Caco-2 (cell line): ENCODE measurements at regions of chr6 and their contacts with region 1.

Region 1: GRCh38 chr6:157124485-157125254 is 198.6 kb downstream of the TMEM242 start:
- DNase-seq: no peak
- H3K4me3 ChIP-seq: no peak overlapping the region
- H3K4me3 Mint-ChIP-seq: no peak overlapping the region
- H3K27ac Mint-ChIP-seq: no peak overlapping the region
- H3K4me1 ChIP-seq: peaks cover 35% of the 10 kb centered on the region
- H3K4me1 Mint-ChIP-seq: peaks cover 35% of the 10 kb centered on the region
- H3K27me3 ChIP-seq: no peaks in the 10 kb centered on the region
- H3K27me3 Mint-ChIP-seq: no peaks in the 10 kb centered on the region
- CTCF ChIP-seq: no peak

Region 2: GRCh38 chr6:156925718-156926615 is 198.7 kb before region 1 on chr6:
- CTCF ChIA-PET with region 1: no interaction called
- POLR2A ChIA-PET with region 1: no interaction called
- intact Hi-C with region 1: no loop called
- DNase-seq: peak in 1 of 2 experiments; percentile 39
- H3K4me3 ChIP-seq: no peak overlapping the region
- H3K4me3 Mint-ChIP-seq: peak overlapping the region; percentile 51
- H3K27ac Mint-ChIP-seq: peak overlapping the region; percentile 16
- H3K4me1 ChIP-seq: peaks cover 23% of the 10 kb centered on the region
- H3K4me1 Mint-ChIP-seq: peaks cover 10% of the 10 kb centered on the region
- H3K27me3 ChIP-seq: no peaks in the 10 kb centered on the region
- H3K27me3 Mint-ChIP-seq: no peaks in the 10 kb centered on the region
- CTCF ChIP-seq: no peak

Region 3: DNA sequence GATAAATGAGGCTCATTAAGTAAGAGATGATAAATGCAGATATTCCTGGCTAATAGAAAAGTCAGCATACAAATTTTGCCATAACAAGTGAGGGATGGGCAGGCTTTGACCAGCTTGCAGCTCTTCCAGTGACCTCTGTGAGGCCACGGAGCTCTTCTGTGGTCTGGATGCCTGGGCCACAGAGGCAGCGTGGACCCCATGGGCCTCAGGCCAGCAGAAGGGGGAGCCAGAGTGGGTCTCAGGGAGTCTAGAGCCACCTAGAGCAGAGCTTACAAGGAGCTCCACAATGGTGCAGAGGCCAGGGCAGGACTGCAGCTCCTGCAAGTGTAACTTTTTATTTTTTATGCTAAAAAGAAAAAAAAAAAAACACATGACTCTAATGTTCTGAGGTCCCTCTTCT is 182.4 kb before region 1 on chr6:
- CTCF ChIA-PET with region 1: no interaction called
- POLR2A ChIA-PET with region 1: no interaction called
- intact Hi-C with region 1: no loop called
- DNase-seq: no peak
- H3K4me3 ChIP-seq: no peak overlapping the region
- H3K4me3 Mint-ChIP-seq: no peak overlapping the region
- H3K27ac Mint-ChIP-seq: no peak overlapping the region
- H3K4me1 ChIP-seq: peaks cover 4% of the 10 kb centered on the region; the same call in 1 of the 2 replicates
- H3K4me1 Mint-ChIP-seq: peaks cover 6% of the 10 kb centered on the region
- H3K27me3 ChIP-seq: no peaks in the 10 kb centered on the region
- H3K27me3 Mint-ChIP-seq: no peaks in the 10 kb centered on the region
- CTCF ChIP-seq: no peak

Region 4: DNA sequence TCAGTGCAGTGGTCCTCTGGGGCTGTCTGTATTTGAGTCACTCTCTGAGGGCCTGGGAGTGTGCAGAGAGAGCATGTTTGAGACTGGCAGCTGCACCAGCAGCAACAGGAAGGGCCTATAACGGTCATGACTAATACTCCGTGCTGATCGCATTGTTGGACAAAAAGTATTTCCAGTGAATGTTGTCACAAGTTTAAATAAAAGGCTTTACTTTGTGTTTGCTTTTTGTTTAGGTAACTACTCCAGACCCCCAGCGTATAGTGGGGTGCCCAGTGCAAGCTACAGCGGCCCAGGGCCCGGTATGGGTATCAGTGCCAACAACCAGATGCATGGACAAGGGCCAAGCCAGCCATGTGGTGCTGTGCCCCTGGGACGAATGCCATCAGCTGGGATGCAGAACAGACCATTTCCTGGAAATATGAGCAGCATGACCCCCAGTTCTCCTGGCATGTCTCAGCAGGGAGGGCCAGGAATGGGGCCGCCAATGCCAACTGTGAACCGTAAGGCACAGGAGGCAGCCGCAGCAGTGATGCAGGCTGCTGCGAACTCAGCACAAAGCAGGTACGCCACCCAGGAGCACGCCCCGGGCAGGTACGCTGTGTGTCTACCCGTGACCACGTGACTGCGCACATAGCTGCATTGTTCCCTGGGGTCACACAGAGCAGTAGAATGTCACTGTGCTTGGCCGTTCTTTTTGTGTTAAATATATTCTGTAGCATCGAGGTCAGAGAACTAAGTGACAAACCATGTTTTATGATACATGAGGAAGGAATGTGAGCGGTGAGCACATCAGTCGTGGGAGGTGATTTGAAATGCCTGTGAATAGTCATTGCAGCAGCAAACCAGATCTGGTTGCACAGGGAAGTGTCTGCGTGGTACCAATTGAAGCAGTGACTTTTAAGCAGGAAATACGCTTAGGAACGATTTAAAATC is 24.0 kb after region 1 on chr6:
- CTCF ChIA-PET with region 1: no interaction called
- POLR2A ChIA-PET with region 1: no interaction called
- intact Hi-C with region 1: no loop called
- DNase-seq: no peak
- H3K4me3 ChIP-seq: no peak overlapping the region
- H3K4me3 Mint-ChIP-seq: no peak overlapping the region
- H3K27ac Mint-ChIP-seq: no peak overlapping the region
- H3K4me1 ChIP-seq: no peaks in the 10 kb centered on the region
- H3K4me1 Mint-ChIP-seq: no peaks in the 10 kb centered on the region
- H3K27me3 ChIP-seq: no peaks in the 10 kb centered on the region
- H3K27me3 Mint-ChIP-seq: no peaks in the 10 kb centered on the region
- CTCF ChIP-seq: no peak

Region 5: GRCh38 chr6:157184202-157185020 is 59.7 kb after region 1 on chr6:
- CTCF ChIA-PET with region 1: no interaction called
- POLR2A ChIA-PET with region 1: no interaction called
- intact Hi-C with region 1: loop called (anchors 5 kb)
- DNase-seq: peak; percentile 57 to 78
- H3K4me3 ChIP-seq: no peak overlapping the region
- H3K4me3 Mint-ChIP-seq: no peak overlapping the region
- H3K27ac Mint-ChIP-seq: no peak overlapping the region
- H3K4me1 ChIP-seq: peaks cover 10% of the 10 kb centered on the region
- H3K4me1 Mint-ChIP-seq: peaks cover 12% of the 10 kb centered on the region
- H3K27me3 ChIP-seq: no peaks in the 10 kb centered on the region
- H3K27me3 Mint-ChIP-seq: no peaks in the 10 kb centered on the region
- CTCF ChIP-seq: peak; percentile 85 to 89

Region 6: GRCh38 chr6:157211603-157212455 is 87.2 kb after region 1 on chr6:
- CTCF ChIA-PET with region 1: no interaction called
- POLR2A ChIA-PET with region 1: no interaction called
- intact Hi-C with region 1: no loop called
- DNase-seq: no peak
- H3K4me3 ChIP-seq: no peak overlapping the region
- H3K4me3 Mint-ChIP-seq: no peak overlapping the region
- H3K27ac Mint-ChIP-seq: no peak overlapping the region
- H3K4me1 ChIP-seq: no peaks in the 10 kb centered on the region
- H3K4me1 Mint-ChIP-seq: no peaks in the 10 kb centered on the region
- H3K27me3 ChIP-seq: no peaks in the 10 kb centered on the region
- H3K27me3 Mint-ChIP-seq: no peaks in the 10 kb centered on the region
- CTCF ChIP-seq: no peak